Common myeloid progenitor, CD34-positive (primary cell): ENCODE measurements at regions of chr14 and their contacts with region 1.

Region 1: DNA sequence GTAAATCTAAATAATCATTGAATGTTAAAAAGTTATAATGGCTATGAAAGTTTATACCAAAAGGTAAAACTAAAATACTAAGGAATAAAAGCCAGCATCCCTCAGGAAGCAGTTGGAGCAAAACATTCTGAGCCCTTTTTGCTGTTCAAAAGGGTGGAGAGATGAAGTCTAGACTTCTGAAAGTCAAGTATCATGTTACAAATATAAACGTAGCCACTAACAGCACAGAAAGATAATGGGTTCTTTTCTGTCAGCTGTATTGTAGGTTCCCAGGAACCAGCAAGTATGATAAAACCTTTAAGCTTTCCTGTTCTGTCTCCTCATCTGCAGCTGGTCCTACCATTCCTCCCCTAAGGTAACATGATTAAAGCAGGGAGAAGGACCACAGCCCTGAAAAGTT is 16.4 kb upstream of the PLD4 start:
- DNase-seq: no peak
- H3K4me3 ChIP-seq: no peak overlapping the region
- H3K27ac ChIP-seq: no peak overlapping the region
- H3K4me1 ChIP-seq: no peaks in the 10 kb centered on the region
- H3K27me3 ChIP-seq: peaks cover 0 to 37% (median 6%) of the 10 kb centered on the region in 5 experiments

Region 2: DNA sequence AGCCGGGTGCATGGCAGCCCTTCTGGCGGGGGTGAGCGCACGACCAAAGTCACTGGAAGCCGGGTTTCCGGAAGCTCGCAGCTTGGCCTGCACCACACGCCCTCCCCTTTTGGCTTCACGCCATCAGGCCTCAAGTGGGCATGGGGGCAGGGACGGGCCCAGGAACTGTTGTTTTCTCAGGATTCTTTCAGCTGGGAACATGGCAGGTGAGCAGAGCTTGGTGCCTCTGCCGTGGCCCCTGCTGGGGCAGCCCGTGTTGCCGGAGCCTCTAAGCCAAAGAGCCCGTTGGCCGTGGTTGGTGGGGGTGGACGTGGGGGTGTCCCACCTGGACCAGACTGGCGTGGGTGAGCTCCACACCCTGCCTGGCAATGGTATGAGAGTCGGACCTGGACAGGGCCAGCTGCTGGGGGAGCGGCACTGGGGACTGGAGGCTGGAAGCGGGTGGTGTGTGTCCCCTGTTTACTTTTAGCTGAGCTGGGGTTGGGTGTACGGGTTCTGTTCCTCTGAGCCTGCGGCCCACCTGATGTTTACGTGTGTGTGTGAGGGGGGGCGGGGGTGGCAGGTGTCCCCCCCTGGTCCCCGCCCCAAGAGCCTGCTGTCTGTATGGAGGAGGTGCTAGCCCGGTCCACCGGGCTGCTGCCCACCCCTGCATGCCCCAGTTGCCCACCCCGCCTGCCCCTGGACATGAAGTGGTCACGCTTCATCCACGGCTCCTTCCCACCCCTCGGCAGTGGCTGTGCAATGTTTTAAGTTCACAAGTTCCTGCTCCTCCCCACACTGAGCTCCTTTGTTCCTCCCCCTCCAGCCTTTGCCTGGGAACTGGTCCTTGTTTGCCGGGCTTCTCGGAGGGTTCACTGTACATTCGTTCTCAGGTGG is 12.3 kb before region 1 on chr14:
- CTCF ChIA-PET with region 1: interaction called, 10 read pairs
- POLR2A ChIA-PET with region 1: no interaction called
- DNase-seq: peak in 2 of 3 donors; percentile 36 to 39
- H3K4me3 ChIP-seq: no peak overlapping the region
- H3K27ac ChIP-seq: no peak overlapping the region
- H3K4me1 ChIP-seq: peaks cover 0 to 1% (median 0%) of the 10 kb centered on the region in 4 experiments
- H3K27me3 ChIP-seq: peaks cover 0 to 4% (median 0%) of the 10 kb centered on the region in 5 experiments

Region 3: DNA sequence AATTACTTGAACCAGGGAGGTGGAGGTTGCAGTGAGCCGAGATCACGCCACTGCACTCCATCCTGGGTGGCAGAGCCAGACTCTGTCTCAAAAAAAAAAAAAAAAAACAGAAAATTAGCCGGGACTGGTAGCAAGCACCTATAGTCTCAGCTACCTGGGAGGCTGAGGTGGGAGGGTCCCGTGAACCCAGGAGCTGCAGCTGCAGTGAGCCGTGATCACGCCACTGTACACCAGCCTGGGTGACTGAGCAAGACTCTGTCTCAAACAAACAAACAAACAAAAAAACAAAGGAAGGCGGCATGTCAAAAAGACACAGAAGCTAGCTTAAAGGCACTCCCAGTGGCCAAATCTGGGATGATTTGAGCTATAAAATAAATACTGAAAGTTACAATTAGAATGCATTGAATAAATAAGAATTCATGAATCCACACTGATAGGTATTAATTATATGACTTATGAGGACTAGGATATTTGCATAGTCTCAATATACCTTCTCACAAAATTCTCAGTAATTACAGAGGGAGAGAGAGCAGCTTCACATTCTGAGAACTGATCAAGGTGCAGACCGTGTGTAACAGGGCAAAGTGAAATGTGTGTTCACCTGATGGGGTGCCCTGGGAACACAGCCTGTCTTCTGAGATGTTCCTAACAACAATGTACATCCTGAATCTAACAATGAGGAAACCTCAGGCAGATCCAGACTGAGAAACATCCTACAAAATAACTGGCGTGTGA is 199.6 kb after region 1 on chr14:
- CTCF ChIA-PET with region 1: no interaction called
- POLR2A ChIA-PET with region 1: no interaction called
- DNase-seq: no peak
- H3K4me3 ChIP-seq: no peak overlapping the region
- H3K27ac ChIP-seq: no peak overlapping the region
- H3K4me1 ChIP-seq: no peaks in the 10 kb centered on the region
- H3K27me3 ChIP-seq: peaks cover 0 to 8% (median 6%) of the 10 kb centered on the region in 5 experiments